ENCODE measurements at regions of chr14 and their contacts with region 1.

Region 1: GRCh38 chr14:52007637-52008036 is 18.3 kb downstream of the RTRAF start:
- DNase-seq: no peak
- ATAC-seq: no peak
- H3K4me3 ChIP-seq: no peak overlapping the region
- H3K27ac ChIP-seq: no peak overlapping the region
- H3K4me1 ChIP-seq: no peaks in the 10 kb centered on the region
- H3K27me3 ChIP-seq: no peaks in the 10 kb centered on the region
- CTCF ChIP-seq: no peak
- EP300 ChIP-seq: no peak
- POLR2A ChIP-seq: no peak
- RAD21 ChIP-seq: no peak

Region 2: DNA sequence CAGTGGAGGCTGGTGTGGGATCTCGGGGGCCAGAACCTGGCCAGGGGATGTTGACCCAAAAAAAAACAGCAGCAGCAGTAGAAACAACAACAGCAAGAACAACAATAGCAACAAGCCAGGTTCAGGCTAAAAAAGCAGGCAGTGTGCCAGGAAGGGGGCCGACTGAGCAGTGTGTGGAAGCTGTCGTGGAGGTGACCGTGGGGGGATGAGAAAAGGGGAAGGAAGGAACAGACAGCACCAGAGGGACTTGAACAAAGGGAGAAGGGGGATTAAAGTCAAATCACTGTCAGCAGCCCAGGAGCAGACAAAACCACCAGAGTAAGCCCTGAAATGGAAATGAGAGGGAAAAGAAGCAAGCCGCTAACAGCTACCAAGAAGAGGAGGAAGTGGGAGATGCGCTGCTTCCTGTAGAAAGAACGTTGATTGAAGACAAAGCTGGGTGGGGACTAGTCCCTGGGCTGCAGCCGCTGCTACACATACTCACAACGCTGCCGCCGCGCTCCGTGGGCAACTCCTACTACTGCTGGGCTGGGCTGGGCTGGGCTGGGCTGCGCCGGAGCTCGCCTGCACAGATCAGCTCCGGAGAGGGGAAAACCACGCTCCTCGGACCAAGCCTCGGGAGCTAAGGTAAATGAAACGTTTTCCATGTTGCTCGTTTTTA is 147.3 kb before region 1 on chr14 and contains the start of gene GNG2:
- CTCF ChIA-PET with region 1: no interaction called
- POLR2A ChIA-PET with region 1: no interaction called
- in situ Hi-C with region 1: no loop called
- intact Hi-C with region 1: no loop called
- DNase-seq: peak in 1 of 4 experiments; percentile 3
- ATAC-seq: peak; percentile 54; the same call in 2 of the 3 replicates
- H3K4me3 ChIP-seq: no peak within 1 kb of the TSS
- H3K27ac ChIP-seq: no peak within 1 kb of the TSS
- H3K4me1 ChIP-seq: peaks cover 0 to 4% of the 10 kb centered on the region in 2 experiments; a peak in 1 of 5 replicates
- H3K27me3 ChIP-seq: peaks cover 2 to 9% of the 10 kb centered on the region in 2 experiments; a peak in 2 of 5 replicates
- CTCF ChIP-seq: no peak
- EP300 ChIP-seq: no peak
- POLR2A ChIP-seq: no peak
- RAD21 ChIP-seq: no peak
- polyA plus RNA-seq, gene GNG2: not detected

Region 3: GRCh38 chr14:52069304-52070050 is 61.8 kb after region 1 on chr14:
- CTCF ChIA-PET with region 1: no interaction called
- POLR2A ChIA-PET with region 1: no interaction called
- in situ Hi-C with region 1: no loop called
- intact Hi-C with region 1: loop called (anchors 5 kb)
- DNase-seq: no peak
- ATAC-seq: peak; percentile 42; the same call in 2 of the 3 replicates
- H3K4me3 ChIP-seq: no peak overlapping the region
- H3K27ac ChIP-seq: no peak overlapping the region
- H3K4me1 ChIP-seq: peaks cover 0 to 10% of the 10 kb centered on the region in 2 experiments; a peak in 2 of 5 replicates
- H3K27me3 ChIP-seq: peaks cover 3 to 27% of the 10 kb centered on the region in 2 experiments; a peak in 3 of 5 replicates
- CTCF ChIP-seq: no peak
- EP300 ChIP-seq: no peak
- POLR2A ChIP-seq: no peak
- RAD21 ChIP-seq: no peak

Measured in K562 (cell line).